ENCODE measurements at regions of chr15 and their contacts with region 1.

Region 1: GRCh38 chr15:59372352-59373211 is at the start of gene MYO1E:
- DNase-seq: peak; percentile 54
- ATAC-seq: peak; percentile 62
- H3K4me3 Mint-ChIP-seq: peak within 1 kb of the TSS; percentile 96
- H3K27ac Mint-ChIP-seq: peak within 1 kb of the TSS; percentile 89
- H3K4me1 Mint-ChIP-seq: peaks cover 64% of the 10 kb centered on the region
- H3K27me3 Mint-ChIP-seq: no peaks in the 10 kb centered on the region
- CTCF ChIP-seq: no peak
- total RNA-seq, gene MYO1E: 185 and 186 TPM in 2 replicates

Region 2: GRCh38 chr15:59174835-59175831 is 197.4 kb before region 1 on chr15:
- CTCF ChIA-PET with region 1: no interaction called
- POLR2A ChIA-PET with region 1: no interaction called
- intact Hi-C with region 1: loop called (anchors 10 kb)
- DNase-seq: no peak
- ATAC-seq: peak; percentile 99
- H3K4me3 Mint-ChIP-seq: no peak overlapping the region
- H3K27ac Mint-ChIP-seq: peak overlapping the region; percentile 20
- H3K4me1 Mint-ChIP-seq: peaks cover 15% of the 10 kb centered on the region
- H3K27me3 Mint-ChIP-seq: no peaks in the 10 kb centered on the region
- CTCF ChIP-seq: no peak

Region 3: DNA sequence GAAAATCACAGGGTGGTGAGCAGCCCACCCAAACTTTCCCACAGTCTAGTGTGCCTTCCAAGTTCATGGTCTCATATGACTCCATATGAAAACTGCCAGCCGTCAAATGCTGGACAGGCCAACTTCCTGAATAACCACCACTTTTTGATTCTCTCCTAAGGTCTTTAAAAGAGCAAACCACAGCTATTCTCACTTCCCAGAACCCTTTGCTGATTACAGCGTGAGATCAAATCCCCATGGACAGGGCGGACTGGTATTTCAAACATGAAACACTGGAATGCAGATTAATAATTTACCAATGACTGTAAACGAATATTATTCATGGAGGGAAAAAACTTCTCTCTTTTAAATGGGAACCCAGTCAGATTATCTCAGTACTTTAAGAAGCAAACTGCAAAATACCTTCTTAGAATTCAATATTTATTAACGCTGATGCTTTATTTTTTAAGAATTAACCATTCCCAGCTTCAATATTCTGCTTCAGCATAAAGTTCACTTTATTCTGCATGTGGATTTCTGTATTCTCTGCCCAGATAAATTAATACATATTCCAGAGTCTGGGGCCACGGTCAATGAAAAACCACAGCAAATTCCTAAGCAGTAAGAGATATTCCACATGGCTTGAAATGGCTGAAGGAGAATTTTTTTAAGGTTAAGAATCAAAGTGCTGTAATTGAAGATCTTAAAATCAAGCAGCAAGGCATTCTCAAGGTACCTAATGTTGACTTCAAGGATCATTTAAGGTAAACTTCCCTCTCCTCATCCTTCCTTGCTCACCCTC is 42.8 kb before region 1 on chr15:
- CTCF ChIA-PET with region 1: no interaction called
- POLR2A ChIA-PET with region 1: no interaction called
- intact Hi-C with region 1: loop called (anchors 2 kb)
- DNase-seq: no peak
- ATAC-seq: no peak
- H3K4me3 Mint-ChIP-seq: no peak overlapping the region
- H3K27ac Mint-ChIP-seq: no peak overlapping the region
- H3K4me1 Mint-ChIP-seq: peaks cover 84% of the 10 kb centered on the region
- H3K27me3 Mint-ChIP-seq: no peaks in the 10 kb centered on the region
- CTCF ChIP-seq: no peak

Region 4: GRCh38 chr15:59349680-59350420 is 22.7 kb before region 1 on chr15:
- CTCF ChIA-PET with region 1: no interaction called
- POLR2A ChIA-PET with region 1: interaction called, 4 read pairs
- intact Hi-C with region 1: loop called (anchors 2 kb)
- DNase-seq: no peak
- ATAC-seq: peak; percentile 62
- H3K4me3 Mint-ChIP-seq: no peak overlapping the region
- H3K27ac Mint-ChIP-seq: peak overlapping the region; percentile 66
- H3K4me1 Mint-ChIP-seq: peaks cover 92% of the 10 kb centered on the region
- H3K27me3 Mint-ChIP-seq: no peaks in the 10 kb centered on the region
- CTCF ChIP-seq: no peak

Region 5: DNA sequence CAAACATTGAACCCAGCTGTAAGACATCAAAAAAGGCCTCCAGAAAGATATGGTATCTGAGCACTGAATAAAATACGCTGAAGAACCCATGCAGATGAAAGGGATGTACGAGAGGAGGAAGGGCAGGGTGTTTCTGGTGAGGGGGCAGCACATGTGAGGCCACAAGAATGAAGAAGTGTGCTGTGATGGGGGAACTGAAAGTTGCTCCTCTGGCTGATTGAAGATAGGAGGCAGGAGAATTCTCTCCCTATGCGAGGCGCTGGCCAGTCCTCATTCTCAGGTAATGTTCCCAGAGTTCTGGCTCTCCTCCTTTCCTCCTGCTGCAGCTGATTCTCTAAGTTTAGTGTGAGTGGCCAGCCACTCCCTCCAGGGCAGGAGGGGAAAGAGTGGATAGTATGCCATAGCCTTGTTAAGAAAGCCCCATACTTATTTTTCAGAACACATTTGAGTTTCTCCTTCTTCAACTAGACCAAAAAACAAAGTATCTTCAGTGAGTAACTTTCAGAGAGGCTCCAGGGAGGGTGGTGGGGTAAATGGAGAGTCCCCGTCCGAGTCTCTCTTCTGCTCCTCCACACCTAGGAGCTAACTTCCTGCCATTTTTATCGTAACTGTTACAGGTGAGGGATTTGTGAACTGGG is 27.0 kb after region 1 on chr15:
- CTCF ChIA-PET with region 1: interaction called, 11 read pairs
- POLR2A ChIA-PET with region 1: interaction called, 6 read pairs
- intact Hi-C with region 1: loop called (anchors 1 kb)
- DNase-seq: peak; percentile 46
- ATAC-seq: peak; percentile 92
- H3K4me3 Mint-ChIP-seq: peak overlapping the region; percentile 78
- H3K27ac Mint-ChIP-seq: peak overlapping the region; percentile 93
- H3K4me1 Mint-ChIP-seq: peaks cover 78% of the 10 kb centered on the region
- H3K27me3 Mint-ChIP-seq: no peaks in the 10 kb centered on the region
- CTCF ChIP-seq: no peak

Region 6: GRCh38 chr15:59492389-59493377 is 120.1 kb after region 1 on chr15:
- CTCF ChIA-PET with region 1: interaction called, 18 read pairs
- POLR2A ChIA-PET with region 1: no interaction called
- intact Hi-C with region 1: loop called (anchors 1 kb)
- DNase-seq: peak; percentile 31
- ATAC-seq: peak; percentile 93
- H3K4me3 Mint-ChIP-seq: no peak overlapping the region
- H3K27ac Mint-ChIP-seq: peak overlapping the region; percentile 1
- H3K4me1 Mint-ChIP-seq: peaks cover 10% of the 10 kb centered on the region
- H3K27me3 Mint-ChIP-seq: no peaks in the 10 kb centered on the region
- CTCF ChIP-seq: peak; percentile 87

Region 7: DNA sequence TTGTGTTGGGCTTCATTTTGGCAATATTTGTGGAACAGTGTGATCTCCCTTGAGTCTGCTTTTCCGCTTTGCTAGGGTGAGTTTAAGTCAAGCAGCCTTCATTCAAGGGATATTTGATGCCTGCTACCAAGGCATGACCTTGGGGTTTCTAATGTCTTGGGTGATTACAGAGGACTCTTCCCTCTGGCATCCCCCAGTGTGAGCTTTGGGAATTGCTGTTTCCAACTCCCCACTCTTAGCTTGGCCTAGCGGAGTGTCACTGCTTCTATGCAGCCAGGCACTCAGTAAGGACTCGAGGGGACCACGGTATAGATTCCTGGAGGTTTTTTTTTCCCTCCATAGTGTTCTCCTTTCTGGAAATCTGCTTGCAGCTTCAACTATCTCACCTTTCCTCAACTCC is 260.1 kb after region 1 on chr15:
- CTCF ChIA-PET with region 1: no interaction called
- POLR2A ChIA-PET with region 1: no interaction called
- intact Hi-C with region 1: no loop called
- DNase-seq: no peak
- ATAC-seq: no peak
- H3K4me3 Mint-ChIP-seq: no peak overlapping the region
- H3K27ac Mint-ChIP-seq: no peak overlapping the region
- H3K4me1 Mint-ChIP-seq: no peaks in the 10 kb centered on the region
- H3K27me3 Mint-ChIP-seq: no peaks in the 10 kb centered on the region
- CTCF ChIP-seq: no peak

Measured in activated B cell treated with CpG ODN at 0.5 μM for 24 hours (primary cell).